GM12878 (cell line): ENCODE measurements at regions of chr19 and their contacts with region 1.

Region 1: DNA sequence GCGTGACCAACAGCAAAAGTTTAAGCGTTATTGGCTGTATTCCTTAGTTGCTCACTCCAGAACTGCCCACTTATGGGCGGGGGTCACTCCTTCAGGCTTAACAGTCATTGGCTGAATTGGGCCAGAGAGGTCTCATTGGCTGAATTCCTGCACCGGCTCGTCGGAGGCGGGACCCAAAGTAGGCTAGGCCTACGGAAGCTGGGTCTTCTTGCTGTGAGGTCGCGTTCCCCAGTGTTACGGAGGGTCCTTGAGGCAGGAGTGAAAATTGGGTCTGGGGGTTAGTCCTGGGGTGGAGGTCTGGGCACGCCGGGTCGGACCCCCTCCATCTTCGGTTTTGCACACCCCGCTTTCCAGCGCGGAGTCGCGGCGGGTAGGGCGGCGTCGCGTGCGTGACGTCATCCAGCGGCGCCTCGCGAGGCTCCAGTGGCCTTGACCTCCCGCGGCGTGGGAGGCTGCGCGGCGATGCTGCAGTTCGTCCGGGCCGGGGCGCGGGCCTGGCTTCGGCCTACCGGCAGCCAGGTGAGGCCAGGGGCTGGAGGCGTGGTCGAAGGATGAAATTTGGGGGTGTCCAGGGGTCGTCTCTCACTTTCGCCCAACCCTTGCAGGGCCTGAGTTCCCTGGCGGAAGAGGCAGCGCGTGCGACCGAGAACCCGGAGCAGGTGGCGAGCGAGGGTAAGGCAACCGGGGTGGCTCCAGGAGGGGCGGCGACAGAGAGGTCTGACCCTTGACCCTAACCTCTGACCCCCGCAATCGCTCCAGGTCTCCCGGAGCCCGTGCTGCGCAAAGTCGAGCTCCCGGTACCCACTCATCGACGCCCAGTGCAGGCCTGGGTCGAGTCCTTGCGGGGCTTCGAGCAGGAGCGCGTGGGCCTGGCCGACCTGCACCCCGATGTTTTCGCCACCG is at the start of gene MRPL4:
- DNase-seq: peak; percentile 96
- ATAC-seq: peak; percentile 97
- H3K4me3 ChIP-seq: peak within 1 kb of the TSS; percentile 93
- H3K27ac ChIP-seq: peak within 1 kb of the TSS; percentile 96
- H3K4me1 ChIP-seq: peaks cover 17% of the 10 kb centered on the region
- H3K27me3 ChIP-seq: no peaks in the 10 kb centered on the region
- CTCF ChIP-seq: no peak
- EP300 ChIP-seq: no peak
- POLR2A ChIP-seq: peak; percentile 99
- RAD21 ChIP-seq: no peak
- polyA plus RNA-seq, gene MRPL4: 0.79 to 5.8 TPM

Region 2: DNA sequence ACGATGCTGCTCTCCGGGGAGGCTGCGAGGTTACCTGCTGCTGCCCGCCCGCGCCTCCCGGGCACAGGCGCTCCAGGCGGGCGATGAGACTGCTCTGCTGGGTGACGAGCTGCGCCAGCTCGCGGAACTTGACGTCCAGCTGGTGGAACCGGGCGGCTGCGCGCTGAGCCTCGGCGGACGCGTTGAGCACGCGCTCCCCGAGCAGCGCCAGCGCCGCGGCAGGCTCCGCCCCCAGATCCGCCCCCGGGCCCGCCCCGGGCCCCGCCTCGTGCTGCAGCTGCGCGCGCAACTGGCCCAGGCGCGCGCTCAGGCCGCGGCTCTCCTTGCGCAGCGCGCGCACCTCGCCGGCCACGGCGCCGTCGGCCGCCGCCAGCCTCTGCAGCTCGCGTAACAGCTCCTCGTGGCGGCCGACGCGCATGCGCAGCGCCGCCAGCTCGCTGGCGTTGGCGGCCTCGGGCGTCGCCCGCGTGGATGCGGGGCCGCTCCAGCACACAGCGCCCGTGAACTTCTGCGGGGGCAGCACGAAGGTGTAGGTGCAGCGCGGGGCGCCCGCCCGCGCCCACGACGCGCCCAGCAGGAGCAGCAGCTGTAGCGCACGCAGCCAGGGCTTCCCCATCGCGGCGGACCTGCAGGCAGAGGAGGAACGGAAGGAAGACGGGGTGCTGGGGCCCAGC is 156.0 kb before region 1 on chr19:
- CTCF ChIA-PET with region 1: interaction called, 39 read pairs
- POLR2A ChIA-PET with region 1: interaction called, 7 read pairs
- RAD21 ChIA-PET with region 1: interaction called, 11 read pairs
- SMC1A ChIA-PET with region 1: interaction called, 10 read pairs
- in situ Hi-C with region 1: no loop called
- intact Hi-C with region 1: no loop called
- DNase-seq: no peak
- ATAC-seq: peak; percentile 81
- H3K4me3 ChIP-seq: peak overlapping the region; percentile 21; the same call in 1 of the 2 replicates
- H3K27ac ChIP-seq: peak overlapping the region; percentile 70
- H3K4me1 ChIP-seq: peaks cover 35% of the 10 kb centered on the region
- H3K27me3 ChIP-seq: no peaks in the 10 kb centered on the region
- CTCF ChIP-seq: no peak
- EP300 ChIP-seq: no peak
- POLR2A ChIP-seq: peak; percentile 81
- RAD21 ChIP-seq: no peak

Region 3: DNA sequence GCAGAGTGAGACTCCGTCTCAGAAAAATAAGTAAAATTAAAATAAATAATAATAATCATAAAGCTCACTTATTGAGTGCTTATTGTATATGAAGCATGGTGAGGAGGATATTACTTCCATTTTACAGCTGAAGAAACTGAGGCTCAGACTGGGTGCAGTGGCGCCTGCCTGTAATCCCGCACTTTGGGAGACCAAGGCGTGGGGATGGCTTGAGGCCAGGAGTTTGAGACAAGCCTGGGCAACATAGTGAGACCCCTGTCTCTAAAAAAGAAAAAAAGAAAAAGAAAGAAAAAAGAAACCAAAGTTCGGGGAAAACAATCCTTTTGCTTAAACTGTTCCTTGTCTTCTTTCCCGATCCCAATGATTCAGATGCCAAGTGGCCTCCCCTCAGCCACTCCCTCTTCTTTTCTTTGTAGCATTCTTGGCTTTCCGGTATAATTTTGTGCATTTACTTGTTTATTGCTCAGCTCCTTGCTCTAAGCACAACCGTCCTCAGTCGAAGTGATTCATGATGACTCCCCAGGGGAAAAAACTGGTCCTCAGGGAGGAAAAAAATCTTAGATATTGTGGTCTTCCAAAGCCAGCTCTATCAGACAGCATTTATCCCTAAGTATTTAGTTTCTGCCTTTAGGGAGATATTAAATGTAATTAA is 131.4 kb before region 1 on chr19:
- CTCF ChIA-PET with region 1: interaction called, 8 read pairs
- POLR2A ChIA-PET with region 1: interaction called, 3 read pairs
- RAD21 ChIA-PET with region 1: interaction called, 6 read pairs
- SMC1A ChIA-PET with region 1: interaction called, 4 read pairs
- in situ Hi-C with region 1: no loop called
- intact Hi-C with region 1: loop called (anchors 5 kb)
- DNase-seq: no peak
- ATAC-seq: no peak
- H3K4me3 ChIP-seq: no peak overlapping the region
- H3K27ac ChIP-seq: no peak overlapping the region
- H3K4me1 ChIP-seq: 0 out of 2 replicates have a peak, but pooled peaks cover 2% of the 10 kb centered on the region
- H3K27me3 ChIP-seq: no peaks in the 10 kb centered on the region
- CTCF ChIP-seq: no peak
- EP300 ChIP-seq: no peak
- POLR2A ChIP-seq: no peak
- RAD21 ChIP-seq: no peak

Region 4: GRCh38 chr19:10189616-10190015 is 62.4 kb before region 1 on chr19:
- CTCF ChIA-PET with region 1: interaction called, 19 read pairs
- POLR2A ChIA-PET with region 1: interaction called, 4 read pairs
- RAD21 ChIA-PET with region 1: interaction called, 18 read pairs
- SMC1A ChIA-PET with region 1: interaction called, 12 read pairs
- in situ Hi-C with region 1: no loop called
- intact Hi-C with region 1: loop called (anchors 2 kb)
- DNase-seq: no peak
- ATAC-seq: peak; percentile 5; the same call in 1 of the 3 replicates
- H3K4me3 ChIP-seq: 0 out of 2 replicates have a peak overlapping the region, but pooled peaks have one; percentile 19
- H3K27ac ChIP-seq: no peak overlapping the region
- H3K4me1 ChIP-seq: peaks cover 11% of the 10 kb centered on the region
- H3K27me3 ChIP-seq: no peaks in the 10 kb centered on the region
- CTCF ChIP-seq: no peak
- EP300 ChIP-seq: no peak
- POLR2A ChIP-seq: no peak
- RAD21 ChIP-seq: no peak

Region 5: DNA sequence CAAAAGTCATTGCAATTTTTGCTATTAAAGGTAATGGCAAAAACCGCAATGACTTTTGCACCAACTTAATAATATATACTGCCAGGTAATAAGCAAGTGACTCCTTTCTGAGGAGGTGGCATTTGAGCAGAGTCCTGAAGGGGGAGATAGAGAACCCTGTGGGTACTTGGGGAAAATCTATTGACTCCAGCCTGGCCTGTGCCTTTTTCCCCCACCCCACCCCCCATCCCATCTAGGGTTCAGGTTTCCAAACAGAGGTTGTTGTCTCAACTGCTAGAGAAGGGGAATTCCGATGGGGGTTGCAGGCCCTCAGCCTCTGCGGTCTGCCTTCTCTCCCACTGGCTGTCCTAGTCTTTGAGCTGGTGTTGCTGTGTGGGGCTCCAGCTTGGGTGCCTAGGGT is 32.4 kb before region 1 on chr19:
- CTCF ChIA-PET with region 1: interaction called, 56 read pairs
- POLR2A ChIA-PET with region 1: interaction called, 8 read pairs
- RAD21 ChIA-PET with region 1: interaction called, 98 read pairs
- SMC1A ChIA-PET with region 1: interaction called, 78 read pairs
- in situ Hi-C with region 1: no loop called
- intact Hi-C with region 1: loop called (anchors 1 kb)
- DNase-seq: peak; percentile 88
- ATAC-seq: peak; percentile 87
- H3K4me3 ChIP-seq: no peak overlapping the region
- H3K27ac ChIP-seq: peak overlapping the region; percentile 92
- H3K4me1 ChIP-seq: peaks cover 42% of the 10 kb centered on the region
- H3K27me3 ChIP-seq: no peaks in the 10 kb centered on the region
- CTCF ChIP-seq: peak; percentile 71 to 73 (median 73)
- EP300 ChIP-seq: peak; percentile 31 to 91; a peak in 3 of 4 replicates
- POLR2A ChIP-seq: peak; percentile 14
- RAD21 ChIP-seq: peak; percentile 68

Region 6: DNA sequence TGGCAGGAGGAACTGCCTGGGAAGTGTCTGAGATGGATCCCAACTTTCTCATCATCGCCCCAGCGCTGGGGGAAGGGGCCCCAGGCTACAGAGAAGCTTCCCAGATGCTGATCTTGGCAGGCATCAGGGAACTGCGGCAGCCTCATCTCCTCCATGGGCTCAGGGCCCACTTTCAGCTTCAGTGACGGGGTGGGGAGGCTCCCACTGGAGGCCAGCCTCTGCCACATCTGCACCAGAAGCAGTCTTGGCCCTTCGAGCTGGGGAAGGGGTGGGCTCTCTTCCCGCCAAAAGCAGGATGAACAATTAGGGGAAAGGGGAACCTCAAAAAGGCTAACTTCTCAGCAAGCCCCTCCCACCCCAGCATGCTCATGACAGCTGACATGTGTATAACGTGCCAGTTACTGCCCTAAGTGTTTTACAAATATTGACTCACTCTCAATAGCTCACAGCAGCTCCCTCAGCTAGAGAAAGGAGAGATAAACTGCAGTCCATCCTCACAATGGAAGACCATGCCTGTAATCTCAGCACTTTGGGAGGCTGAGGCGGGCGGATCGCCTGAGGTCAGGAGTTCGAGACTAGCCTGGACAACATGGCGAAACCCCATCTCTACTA is 13.8 kb before region 1 on chr19:
- CTCF ChIA-PET with region 1: interaction called, 148 read pairs
- POLR2A ChIA-PET with region 1: interaction called, 35 read pairs
- RAD21 ChIA-PET with region 1: interaction called, 22 read pairs
- SMC1A ChIA-PET with region 1: interaction called, 22 read pairs
- in situ Hi-C with region 1: no loop called
- intact Hi-C with region 1: no loop called
- DNase-seq: no peak
- ATAC-seq: peak; percentile 47
- H3K4me3 ChIP-seq: no peak overlapping the region
- H3K27ac ChIP-seq: peak overlapping the region; percentile 54
- H3K4me1 ChIP-seq: peaks cover 57% of the 10 kb centered on the region
- H3K27me3 ChIP-seq: no peaks in the 10 kb centered on the region
- CTCF ChIP-seq: no peak
- EP300 ChIP-seq: no peak
- POLR2A ChIP-seq: no peak
- RAD21 ChIP-seq: no peak